Right ventricle myocardium superior (tissue), 1 donor: ENCODE measurements at regions of chr1 and their contacts with region 1.

Region 1: GRCh38 chr1:112882271-112882744 is 73.7 kb downstream of the SLC16A1 start:
- DNase-seq: no peak
- ATAC-seq: peak; percentile 74

Region 2: DNA sequence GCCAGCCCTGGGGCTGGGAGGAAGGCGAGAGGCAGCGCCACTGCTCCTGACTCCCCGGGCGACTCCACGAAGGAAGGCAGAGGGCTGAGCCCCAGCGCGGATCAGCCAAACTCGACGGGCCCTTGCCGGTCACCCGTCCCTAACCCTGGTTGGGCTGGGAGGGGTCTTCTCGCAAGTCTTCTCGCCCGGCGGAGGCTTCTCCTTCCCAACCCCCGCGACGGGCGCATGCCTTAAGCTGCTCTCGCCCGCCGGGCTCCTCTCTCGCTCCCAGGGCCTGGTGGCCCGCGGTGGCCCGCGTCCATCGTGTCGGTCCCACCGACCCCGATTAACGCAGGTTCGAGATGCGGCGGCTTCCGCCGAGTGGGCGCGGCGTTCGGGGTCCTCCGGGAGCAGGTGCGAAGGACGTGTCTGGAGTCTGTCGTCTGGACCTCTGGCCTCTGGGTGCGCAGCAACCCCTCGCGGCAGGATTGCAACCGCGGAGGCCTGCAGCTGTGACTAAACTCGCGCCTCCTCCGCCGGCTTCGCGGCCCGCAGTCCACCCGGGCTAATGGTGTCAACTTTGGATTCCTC is 138.2 kb before region 1 on chr1:
- intact Hi-C with region 1: no loop called
- DNase-seq: no peak
- ATAC-seq: peak; percentile 67

Region 3: GRCh38 chr1:113042285-113043143 is 160.2 kb after region 1 on chr1:
- intact Hi-C with region 1: loop called (anchors 2 kb)
- DNase-seq: peak; percentile 78
- ATAC-seq: peak; percentile 95